K562 (cell line): ENCODE measurements at regions of chr9 and their contacts with region 1.

Region 1: DNA sequence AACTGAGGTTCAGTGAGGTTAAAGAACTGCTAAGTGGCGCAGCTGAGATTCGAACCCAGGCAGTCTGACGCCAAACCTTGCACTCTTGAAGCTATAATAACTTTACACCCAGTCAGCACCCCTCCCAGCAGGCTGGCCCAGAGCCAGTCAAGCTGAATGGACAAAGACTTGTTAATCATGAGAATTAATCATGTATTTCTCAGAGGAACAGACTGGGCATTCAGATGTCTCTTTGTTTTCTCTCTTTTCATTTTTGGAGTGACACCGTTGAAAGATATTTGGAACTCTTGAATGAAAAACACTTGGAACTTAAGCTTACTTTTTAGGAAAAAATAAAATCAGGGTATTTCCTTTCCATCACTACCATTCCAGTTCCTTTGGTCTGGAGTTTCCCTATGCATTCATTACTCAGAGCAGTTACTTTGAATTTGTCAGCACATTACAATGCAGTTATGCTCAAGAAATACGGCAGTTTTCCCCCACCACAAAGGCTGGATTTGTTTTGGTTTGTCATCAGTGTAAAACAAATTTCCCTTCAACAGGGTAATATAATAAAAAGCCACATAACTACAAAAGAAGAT is 22.6 kb upstream of the MAMDC2 start:
- DNase-seq: no peak
- ATAC-seq: no peak
- H3K4me3 ChIP-seq: no peak overlapping the region
- H3K27ac ChIP-seq: no peak overlapping the region
- H3K4me1 ChIP-seq: no peaks in the 10 kb centered on the region
- H3K27me3 ChIP-seq: no peaks in the 10 kb centered on the region
- CTCF ChIP-seq: no peak
- EP300 ChIP-seq: no peak
- POLR2A ChIP-seq: no peak
- RAD21 ChIP-seq: no peak

Region 2: DNA sequence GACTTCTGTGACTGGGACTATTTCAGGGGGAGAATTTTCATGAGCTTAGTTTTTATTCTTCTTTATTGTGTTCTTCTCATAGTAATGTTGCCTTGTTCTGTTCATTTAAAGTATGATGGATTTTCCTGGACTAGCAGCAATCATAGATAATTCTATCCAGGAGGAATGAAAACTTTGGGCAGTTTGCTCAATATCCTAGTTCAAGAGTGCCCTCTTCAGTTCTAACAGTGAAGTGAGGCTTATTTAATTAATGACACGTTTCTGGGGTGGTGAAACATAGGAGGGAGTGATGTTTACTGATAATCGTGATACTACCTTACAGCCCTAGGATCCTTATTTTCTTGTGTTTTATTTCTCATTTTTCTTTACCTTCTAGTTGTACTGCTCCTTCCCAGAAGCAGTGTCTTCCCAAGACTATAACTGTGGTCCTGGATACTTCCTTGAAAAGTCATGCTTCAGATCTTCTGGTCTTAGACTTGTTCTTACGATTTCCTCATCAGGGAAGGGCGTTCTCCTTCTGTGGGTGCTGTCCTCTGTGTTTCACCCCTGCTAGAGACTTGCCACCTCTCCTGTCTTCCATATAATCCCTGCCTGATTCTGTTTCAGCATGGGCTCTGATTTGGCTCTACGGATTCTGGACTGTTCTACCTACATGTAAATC is 143.1 kb before region 1 on chr9:
- CTCF ChIA-PET with region 1: no interaction called
- POLR2A ChIA-PET with region 1: no interaction called
- in situ Hi-C with region 1: no loop called
- intact Hi-C with region 1: no loop called
- DNase-seq: peak in 2 of 4 experiments; percentile 10 to 24
- ATAC-seq: peak; percentile 53; the same call in 2 of the 3 replicates
- H3K4me3 ChIP-seq: no peak overlapping the region
- H3K27ac ChIP-seq: no peak overlapping the region
- H3K4me1 ChIP-seq: no peaks in the 10 kb centered on the region
- H3K27me3 ChIP-seq: no peaks in the 10 kb centered on the region
- CTCF ChIP-seq: peak; percentile 17 to 61 (median 51); a peak in 5 of 6 replicates
- EP300 ChIP-seq: no peak
- POLR2A ChIP-seq: no peak
- RAD21 ChIP-seq: peak; percentile 41 to 70

Region 3: DNA sequence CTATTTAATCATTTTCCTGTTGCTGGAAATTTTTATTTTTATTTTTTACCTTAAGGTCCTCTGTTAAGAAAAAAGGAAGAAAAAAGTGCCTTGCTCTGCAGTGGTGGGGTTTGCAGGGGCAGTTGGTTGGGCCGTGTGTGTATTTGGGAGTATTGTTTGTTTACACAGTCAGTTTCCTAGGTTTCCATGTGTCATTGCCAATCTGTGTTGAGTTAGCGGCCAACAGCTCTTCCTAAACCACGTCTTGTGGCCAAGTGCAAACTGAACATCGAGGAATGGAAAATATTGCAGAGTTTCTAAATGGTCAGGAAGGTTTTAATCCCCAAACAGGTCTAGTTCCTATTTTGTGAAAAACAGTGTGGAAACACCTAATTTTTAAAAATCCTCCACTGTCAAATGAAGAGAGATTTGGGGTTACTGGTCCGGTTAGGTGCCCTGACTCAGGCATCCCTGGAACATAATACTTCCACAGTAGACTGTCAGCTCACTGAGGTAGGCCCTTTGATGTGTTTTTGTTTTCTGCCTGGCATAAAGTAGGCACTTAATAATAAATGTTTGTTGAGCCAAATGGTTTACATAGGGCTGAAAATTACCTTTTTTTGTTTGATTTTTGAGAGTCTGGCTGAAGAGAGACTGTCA is 59.5 kb after region 1 on chr9:
- CTCF ChIA-PET with region 1: no interaction called
- POLR2A ChIA-PET with region 1: no interaction called
- in situ Hi-C with region 1: no loop called
- intact Hi-C with region 1: loop called (anchors 2 kb)
- DNase-seq: no peak
- ATAC-seq: no peak
- H3K4me3 ChIP-seq: no peak overlapping the region
- H3K27ac ChIP-seq: no peak overlapping the region
- H3K4me1 ChIP-seq: no peaks in the 10 kb centered on the region
- H3K27me3 ChIP-seq: no peaks in the 10 kb centered on the region
- CTCF ChIP-seq: no peak
- EP300 ChIP-seq: no peak
- POLR2A ChIP-seq: no peak
- RAD21 ChIP-seq: no peak

Region 4: DNA sequence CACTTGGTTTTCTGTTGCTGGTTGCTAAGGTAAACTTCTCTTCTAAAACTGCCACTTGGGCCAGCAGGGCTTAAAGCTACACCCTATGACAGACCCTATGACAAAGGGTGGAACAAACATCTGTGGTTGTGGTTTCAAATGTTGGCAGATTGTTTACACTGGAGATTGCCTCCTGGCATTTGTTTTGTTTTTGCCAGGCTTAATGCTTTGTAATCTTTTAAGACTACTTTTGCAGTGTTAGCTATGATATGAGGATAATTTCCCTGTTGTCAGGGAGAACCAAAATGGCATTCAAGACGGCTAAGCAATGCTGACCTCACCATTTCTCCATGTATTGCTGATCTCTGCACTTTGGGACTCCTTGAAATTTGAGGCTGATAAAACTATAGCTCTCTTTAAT is 72.9 kb after region 1 on chr9:
- CTCF ChIA-PET with region 1: no interaction called
- POLR2A ChIA-PET with region 1: no interaction called
- in situ Hi-C with region 1: no loop called
- intact Hi-C with region 1: no loop called
- DNase-seq: no peak
- ATAC-seq: no peak
- H3K4me3 ChIP-seq: no peak overlapping the region
- H3K27ac ChIP-seq: no peak overlapping the region
- H3K4me1 ChIP-seq: no peaks in the 10 kb centered on the region
- H3K27me3 ChIP-seq: no peaks in the 10 kb centered on the region
- CTCF ChIP-seq: no peak
- EP300 ChIP-seq: no peak
- POLR2A ChIP-seq: no peak
- RAD21 ChIP-seq: no peak